T-cell (primary cell): ENCODE measurements at regions of chr20 and their contacts with region 1.

Region 1: GRCh38 chr20:16672299-16672698 is 57.5 kb upstream of the SNRPB2 start:
- DNase-seq: no peak
- ATAC-seq: no peak
- H3K4me3 ChIP-seq: no peak overlapping the region
- H3K4me3 Mint-ChIP-seq: no peak overlapping the region
- H3K27ac ChIP-seq: no peak overlapping the region
- H3K27ac Mint-ChIP-seq: no peak overlapping the region
- H3K4me1 ChIP-seq: no peaks in the 10 kb centered on the region
- H3K4me1 Mint-ChIP-seq: no peaks in the 10 kb centered on the region
- H3K27me3 ChIP-seq: peaks cover 2 to 3% of the 10 kb centered on the region in 2 experiments
- H3K27me3 Mint-ChIP-seq: peaks cover 7 to 14% of the 10 kb centered on the region in 2 donors

Region 2: DNA sequence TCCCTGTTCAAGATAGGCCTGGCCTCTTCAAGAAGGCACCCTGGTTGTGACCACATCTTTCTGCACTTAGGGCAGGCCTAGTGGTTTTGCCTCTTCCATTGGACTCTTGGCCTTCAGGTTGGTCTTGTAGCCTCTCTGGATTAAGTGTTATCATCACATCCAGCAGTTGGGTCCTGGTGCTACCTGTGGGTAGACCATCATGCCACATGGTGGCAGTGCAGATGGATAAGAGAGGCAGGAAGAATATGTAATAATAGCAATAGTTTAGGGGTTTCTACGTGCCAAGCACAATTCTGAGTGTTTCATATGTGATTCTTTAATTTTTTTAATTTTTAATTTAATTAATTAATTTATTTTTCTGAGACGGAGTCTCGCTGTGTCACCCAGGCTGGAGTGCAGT is 29.0 kb after region 1 on chr20:
- CTCF ChIA-PET with region 1: no interaction called
- POLR2A ChIA-PET with region 1: interaction called in 1 of 2 experiments, 12 read pairs
- DNase-seq: peak in 31 of 35 experiments; percentile 4 to 57 (median 24)
- ATAC-seq: peak in 2 of 4 experiments; percentile 38 to 46
- H3K4me3 ChIP-seq: no peak overlapping the region
- H3K4me3 Mint-ChIP-seq: no peak overlapping the region
- H3K27ac ChIP-seq: no peak overlapping the region
- H3K27ac Mint-ChIP-seq: no peak overlapping the region
- H3K4me1 ChIP-seq: no peaks in the 10 kb centered on the region
- H3K4me1 Mint-ChIP-seq: no peaks in the 10 kb centered on the region
- H3K27me3 ChIP-seq: peaks cover 3 to 8% of the 10 kb centered on the region in 2 experiments
- H3K27me3 Mint-ChIP-seq: peaks cover 9 to 14% of the 10 kb centered on the region in 2 donors